Endothelial cell of umbilical vein (primary cell): ENCODE measurements at regions of chr10 and their contacts with region 1.

Region 1: DNA sequence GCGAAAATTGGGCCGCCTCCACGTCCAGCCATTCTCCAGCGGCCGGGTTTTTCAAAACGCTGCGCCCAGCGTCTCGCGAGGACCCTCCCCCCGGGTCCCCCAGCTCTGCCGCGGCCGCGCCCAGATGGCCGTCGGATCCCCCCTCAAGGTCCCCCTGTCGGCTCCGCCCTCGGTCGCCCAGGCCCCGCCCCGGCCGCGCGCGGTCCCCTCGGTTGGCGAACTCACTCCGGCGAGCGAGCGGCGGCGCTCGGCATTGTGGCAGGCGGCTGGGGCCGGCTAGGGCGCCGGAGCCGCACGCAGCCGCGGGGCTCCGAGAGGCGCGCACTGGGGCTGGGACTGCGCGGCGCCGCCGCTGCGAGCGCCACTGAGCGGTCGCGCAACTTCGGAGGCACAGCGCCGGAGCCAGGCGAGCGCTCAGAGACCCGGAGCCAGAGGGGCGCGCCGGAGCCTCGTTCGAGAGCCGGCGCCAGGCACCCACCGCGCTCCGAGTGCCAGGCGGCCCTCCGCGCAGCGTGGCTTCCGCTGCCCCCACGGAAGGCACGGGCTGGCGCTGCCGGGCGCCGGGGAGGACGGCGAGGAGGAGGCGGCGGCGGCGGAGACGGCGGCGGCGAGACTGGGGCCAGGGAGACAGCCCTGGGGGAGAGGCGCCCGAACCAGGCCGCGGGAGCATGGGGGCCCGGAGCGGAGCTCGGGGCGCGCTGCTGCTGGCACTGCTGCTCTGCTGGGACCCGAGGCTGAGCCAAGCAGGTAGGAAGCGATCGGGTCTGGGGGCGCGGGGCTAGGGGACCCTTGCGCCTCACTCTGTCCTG is at the start of gene UNC5B:
- DNase-seq: peak; percentile 80
- H3K4me3 ChIP-seq: peak within 1 kb of the TSS; percentile 11 to 36 (median 33)
- H3K27ac ChIP-seq: no peak within 1 kb of the TSS
- H3K4me1 ChIP-seq: peaks cover 21% of the 10 kb centered on the region
- H3K27me3 ChIP-seq: peaks cover 46 to 63% of the 10 kb centered on the region in 2 experiments
- CTCF ChIP-seq: peak in 1 of 2 donors; percentile 19
- POLR2A ChIP-seq: no peak
- total RNA-seq, gene UNC5B: 2.5 and 5.4 TPM in 2 replicates

Region 2: DNA sequence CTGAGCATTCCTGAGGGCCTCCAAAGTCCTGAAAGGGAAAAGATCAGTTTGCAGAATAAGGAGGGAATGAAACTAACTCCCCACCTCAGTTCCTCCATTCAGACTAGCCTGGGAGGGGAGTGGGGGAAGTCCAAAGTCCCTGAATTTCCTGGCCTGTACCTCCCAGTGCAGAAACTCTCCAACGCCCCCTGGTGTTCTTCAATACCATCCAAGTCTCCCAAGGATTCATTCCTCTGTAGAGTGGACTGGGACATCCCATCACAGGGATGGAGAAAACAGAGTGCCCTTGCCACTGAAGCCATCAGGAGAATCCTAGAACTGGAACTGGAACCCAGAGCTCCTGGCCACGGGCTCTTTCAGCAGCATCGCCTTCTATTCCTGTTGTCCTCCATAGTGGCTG is 1412.4 kb before region 1 on chr10:
- CTCF ChIA-PET with region 1: no interaction called
- POLR2A ChIA-PET with region 1: no interaction called
- dilution Hi-C with region 1: no loop called
- intact Hi-C with region 1: no loop called
- DNase-seq: peak; percentile 56
- H3K4me3 ChIP-seq: no peak overlapping the region
- H3K27ac ChIP-seq: no peak overlapping the region
- H3K4me1 ChIP-seq: peaks cover 20% of the 10 kb centered on the region
- H3K27me3 ChIP-seq: peaks cover 13 to 23% of the 10 kb centered on the region in 2 experiments
- CTCF ChIP-seq: peak; percentile 77 to 79
- POLR2A ChIP-seq: no peak

Region 3: DNA sequence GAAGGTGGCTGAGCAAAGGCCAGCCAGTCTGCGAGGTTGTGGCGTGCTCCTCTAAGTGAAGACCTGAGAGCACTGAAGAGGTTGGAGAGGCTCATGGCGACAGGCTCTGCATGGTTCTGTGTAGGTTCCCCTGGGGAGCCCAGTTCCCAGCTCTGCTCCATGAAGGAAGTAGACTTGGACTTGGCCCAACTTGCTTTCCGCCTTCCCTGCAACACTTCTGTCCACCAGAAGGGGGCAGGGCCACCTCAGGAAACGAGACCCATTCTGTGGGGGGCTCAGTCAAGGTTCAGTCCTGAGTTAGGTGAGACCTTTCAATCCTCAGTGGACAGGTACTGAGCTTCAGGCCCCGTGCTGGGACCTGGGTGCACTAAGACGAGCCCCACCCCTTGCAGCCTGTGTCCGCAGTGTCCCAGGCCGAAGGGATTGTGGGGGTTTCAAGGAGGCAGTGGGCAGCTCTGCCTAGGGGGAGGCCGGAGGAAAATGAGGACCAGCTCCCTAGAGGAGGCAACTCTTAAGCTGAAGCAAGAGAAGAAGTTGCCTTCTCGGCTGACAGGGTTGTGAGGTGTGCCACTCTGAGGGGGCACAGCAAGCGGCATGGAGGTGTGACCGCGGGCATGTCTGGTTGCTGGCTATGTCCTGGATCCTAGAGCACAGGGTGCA is 309.1 kb before region 1 on chr10:
- CTCF ChIA-PET with region 1: interaction called, 13 read pairs
- POLR2A ChIA-PET with region 1: no interaction called
- dilution Hi-C with region 1: no loop called
- intact Hi-C with region 1: loop called (anchors 1 kb)
- DNase-seq: peak; percentile 56
- H3K4me3 ChIP-seq: no peak overlapping the region
- H3K27ac ChIP-seq: no peak overlapping the region
- H3K4me1 ChIP-seq: no peaks in the 10 kb centered on the region
- H3K27me3 ChIP-seq: peaks cover 4 to 10% of the 10 kb centered on the region in 2 experiments
- CTCF ChIP-seq: peak; percentile 89 to 91
- POLR2A ChIP-seq: no peak

Region 4: DNA sequence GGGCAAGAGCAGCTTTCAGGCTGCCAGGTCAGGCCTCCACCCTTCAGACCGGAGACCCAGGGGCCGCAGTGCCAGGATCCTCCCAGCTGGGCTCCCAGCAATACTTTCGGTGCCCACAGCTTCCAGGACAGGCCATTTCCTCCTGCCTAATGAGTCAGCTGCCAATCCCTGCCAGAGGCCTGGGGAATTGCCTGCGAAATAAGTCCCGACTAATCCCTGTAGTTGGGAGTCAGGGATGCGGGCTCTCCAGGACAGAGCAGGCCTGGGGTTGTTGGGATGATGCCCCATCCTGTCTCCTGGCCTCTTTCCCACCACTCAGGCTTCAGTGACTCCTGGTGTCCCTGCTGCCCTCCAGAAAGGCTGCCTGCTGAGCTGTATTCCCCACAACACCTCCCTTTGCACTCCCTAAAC is 143.7 kb before region 1 on chr10:
- CTCF ChIA-PET with region 1: interaction called, 3 read pairs
- POLR2A ChIA-PET with region 1: no interaction called
- dilution Hi-C with region 1: no loop called
- intact Hi-C with region 1: loop called (anchors 10 kb)
- DNase-seq: peak; percentile 56
- H3K4me3 ChIP-seq: no peak overlapping the region
- H3K27ac ChIP-seq: no peak overlapping the region
- H3K4me1 ChIP-seq: peaks cover 6% of the 10 kb centered on the region
- H3K27me3 ChIP-seq: no peaks in the 10 kb centered on the region
- CTCF ChIP-seq: no peak
- POLR2A ChIP-seq: no peak

Region 5: GRCh38 chr10:71244431-71245419 is 32.2 kb after region 1 on chr10:
- CTCF ChIA-PET with region 1: interaction called, 9 read pairs
- POLR2A ChIA-PET with region 1: no interaction called
- dilution Hi-C with region 1: no loop called
- intact Hi-C with region 1: loop called (anchors 2 kb)
- DNase-seq: peak; percentile 59
- H3K4me3 ChIP-seq: no peak overlapping the region
- H3K27ac ChIP-seq: no peak overlapping the region
- H3K4me1 ChIP-seq: peaks cover 27% of the 10 kb centered on the region
- H3K27me3 ChIP-seq: peaks cover 0 to 10% of the 10 kb centered on the region in 2 experiments
- CTCF ChIP-seq: no peak
- POLR2A ChIP-seq: no peak

Region 6: GRCh38 chr10:71285180-71285545 is 72.6 kb after region 1 on chr10:
- CTCF ChIA-PET with region 1: interaction called, 10 read pairs
- POLR2A ChIA-PET with region 1: no interaction called
- dilution Hi-C with region 1: no loop called
- intact Hi-C with region 1: loop called (anchors 1 kb)
- DNase-seq: peak; percentile 36
- H3K4me3 ChIP-seq: no peak overlapping the region
- H3K27ac ChIP-seq: no peak overlapping the region
- H3K4me1 ChIP-seq: no peaks in the 10 kb centered on the region
- H3K27me3 ChIP-seq: no peaks in the 10 kb centered on the region
- CTCF ChIP-seq: peak; percentile 64 to 82
- POLR2A ChIP-seq: no peak

Region 7: DNA sequence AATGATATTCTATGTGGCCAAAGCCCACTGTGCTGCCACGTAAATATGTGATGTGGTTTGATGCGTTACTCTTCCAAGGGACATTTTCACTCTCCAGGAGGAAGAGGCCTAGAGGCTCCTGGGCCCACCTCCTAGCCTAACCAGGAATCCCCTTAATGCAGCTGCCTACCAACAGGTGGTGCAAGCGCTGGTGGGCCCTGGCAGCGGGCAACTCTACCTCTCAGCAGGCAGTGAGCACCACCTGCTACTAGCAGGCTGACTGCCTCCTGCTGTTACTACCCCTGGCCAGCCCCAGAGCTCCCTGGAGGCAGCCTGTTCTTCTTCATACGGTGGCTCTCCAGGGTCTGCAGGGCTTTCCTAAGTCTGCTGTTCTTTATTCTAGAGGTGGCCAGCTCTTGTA is 247.0 kb after region 1 on chr10:
- CTCF ChIA-PET with region 1: no interaction called
- POLR2A ChIA-PET with region 1: no interaction called
- dilution Hi-C with region 1: no loop called
- intact Hi-C with region 1: no loop called
- DNase-seq: no peak
- H3K4me3 ChIP-seq: no peak overlapping the region
- H3K27ac ChIP-seq: no peak overlapping the region
- H3K4me1 ChIP-seq: no peaks in the 10 kb centered on the region
- H3K27me3 ChIP-seq: peaks cover 2 to 3% of the 10 kb centered on the region in 2 experiments
- CTCF ChIP-seq: no peak
- POLR2A ChIP-seq: no peak

Region 8: GRCh38 chr10:71659111-71659634 is 446.7 kb after region 1 on chr10:
- CTCF ChIA-PET with region 1: no interaction called
- POLR2A ChIA-PET with region 1: no interaction called
- dilution Hi-C with region 1: no loop called
- intact Hi-C with region 1: no loop called
- DNase-seq: no peak
- H3K4me3 ChIP-seq: no peak overlapping the region
- H3K27ac ChIP-seq: no peak overlapping the region
- H3K4me1 ChIP-seq: no peaks in the 10 kb centered on the region
- H3K27me3 ChIP-seq: peaks cover 0 to 6% of the 10 kb centered on the region in 2 experiments
- CTCF ChIP-seq: no peak
- POLR2A ChIP-seq: no peak